Activated CD4-positive, alpha-beta T cell treated with anti-CD3 and anti-CD28 coated beads, Interleukin-2, amount 10 ng/mL, durations not matched to agents 24 days and 14 days (primary cell): ENCODE measurements at regions of chr11 and their contacts with region 1.

Region 1: GRCh38 chr11:67583247-67584204 is at the start of gene GSTP1:
- DNase-seq: peak; percentile 94
- H3K4me3 Mint-ChIP-seq: peak within 1 kb of the TSS; percentile 95
- H3K27ac Mint-ChIP-seq: peak within 1 kb of the TSS; percentile 94
- H3K4me1 Mint-ChIP-seq: peaks cover 40% of the 10 kb centered on the region
- H3K27me3 Mint-ChIP-seq: peaks cover 19% of the 10 kb centered on the region
- total RNA-seq, gene GSTP1: 305 and 312 TPM in 2 replicates

Region 2: DNA sequence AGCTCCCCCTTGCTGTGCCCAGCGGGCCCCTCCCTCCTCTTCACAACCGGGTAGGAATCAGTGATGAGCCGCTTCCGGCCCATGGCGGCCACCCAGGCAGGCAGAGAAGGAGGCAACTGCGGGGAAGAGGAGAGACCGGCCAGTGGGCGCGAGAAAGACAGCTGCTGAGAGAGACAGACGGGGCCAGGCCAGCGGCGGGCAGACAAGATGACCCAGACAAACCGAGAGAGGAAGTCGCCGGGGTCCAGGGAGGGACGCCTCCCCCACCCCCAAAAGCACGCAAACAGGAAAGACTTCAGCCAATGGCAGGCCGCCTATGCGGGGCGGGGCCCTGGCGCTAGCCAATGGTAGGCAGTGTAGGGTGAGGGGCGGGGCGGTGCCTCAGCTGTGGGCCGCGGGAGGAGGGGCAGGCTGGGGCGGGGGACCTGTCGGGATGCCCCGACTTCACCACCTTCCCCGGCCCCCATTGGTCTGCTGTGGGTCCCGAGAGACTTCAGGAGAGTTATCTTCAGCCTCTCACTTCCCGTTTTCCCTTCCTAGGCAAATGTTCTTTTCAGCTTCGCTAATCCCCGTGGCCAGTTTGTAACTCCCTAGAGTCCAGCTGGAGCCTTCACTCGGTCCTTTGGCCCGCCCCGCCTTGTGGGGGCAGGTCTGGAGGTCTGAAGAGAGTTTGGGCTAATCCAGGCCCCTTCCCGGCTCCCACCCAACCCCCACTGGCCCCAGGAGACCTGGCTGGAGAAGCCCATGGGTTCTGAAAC is 230.0 kb before region 1 on chr11 and contains the start of gene POLD4:
- intact Hi-C with region 1: loop called (anchors 10 kb)
- DNase-seq: peak; percentile 99
- H3K4me3 Mint-ChIP-seq: peak within 1 kb of the TSS; percentile 97
- H3K27ac Mint-ChIP-seq: peak within 1 kb of the TSS; percentile 98
- H3K4me1 Mint-ChIP-seq: peaks cover 41% of the 10 kb centered on the region
- H3K27me3 Mint-ChIP-seq: peaks cover 5% of the 10 kb centered on the region
- total RNA-seq, gene POLD4: 36.0 and 36.4 TPM in 2 replicates

Region 3: DNA sequence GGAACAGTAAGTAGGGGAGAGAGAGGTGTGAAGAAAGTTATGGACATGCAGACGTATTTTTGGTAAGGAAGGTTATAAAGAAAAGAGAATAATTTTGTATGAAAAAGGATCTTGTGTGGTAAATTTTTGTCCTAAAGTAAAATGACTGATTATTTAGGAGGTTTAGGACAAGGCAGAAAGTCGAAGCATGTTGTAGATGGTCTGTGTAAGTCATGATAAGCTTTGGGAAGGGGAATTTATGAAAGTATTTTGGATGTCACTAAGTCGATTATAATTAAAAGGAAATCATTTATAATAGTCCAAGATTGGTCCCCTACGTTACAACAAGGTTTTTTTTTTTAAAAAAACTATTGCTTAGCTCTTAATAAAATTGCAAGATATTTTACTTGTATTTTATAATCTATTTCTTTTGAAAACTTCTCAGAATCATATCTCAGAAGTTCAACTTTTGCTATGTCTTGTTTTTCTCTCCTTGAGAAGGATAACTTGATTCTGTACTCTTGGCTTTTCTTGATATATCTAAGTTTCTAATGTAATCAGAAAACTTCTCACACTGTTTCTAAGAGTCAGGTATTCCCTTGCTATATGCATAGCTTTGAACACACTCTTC is 49.4 kb before region 1 on chr11:
- intact Hi-C with region 1: no loop called
- DNase-seq: no peak
- H3K4me3 Mint-ChIP-seq: no peak overlapping the region
- H3K27ac Mint-ChIP-seq: no peak overlapping the region
- H3K4me1 Mint-ChIP-seq: no peaks in the 10 kb centered on the region
- H3K27me3 Mint-ChIP-seq: peaks cover 4% of the 10 kb centered on the region

Region 4: GRCh38 chr11:67613960-67614715 is 30.6 kb after region 1 on chr11:
- intact Hi-C with region 1: loop called (anchors 5 kb)
- DNase-seq: peak; percentile 96
- H3K4me3 Mint-ChIP-seq: peak overlapping the region; percentile 84
- H3K27ac Mint-ChIP-seq: peak overlapping the region; percentile 99
- H3K4me1 Mint-ChIP-seq: peaks cover 16% of the 10 kb centered on the region
- H3K27me3 Mint-ChIP-seq: no peaks in the 10 kb centered on the region

Region 5: DNA sequence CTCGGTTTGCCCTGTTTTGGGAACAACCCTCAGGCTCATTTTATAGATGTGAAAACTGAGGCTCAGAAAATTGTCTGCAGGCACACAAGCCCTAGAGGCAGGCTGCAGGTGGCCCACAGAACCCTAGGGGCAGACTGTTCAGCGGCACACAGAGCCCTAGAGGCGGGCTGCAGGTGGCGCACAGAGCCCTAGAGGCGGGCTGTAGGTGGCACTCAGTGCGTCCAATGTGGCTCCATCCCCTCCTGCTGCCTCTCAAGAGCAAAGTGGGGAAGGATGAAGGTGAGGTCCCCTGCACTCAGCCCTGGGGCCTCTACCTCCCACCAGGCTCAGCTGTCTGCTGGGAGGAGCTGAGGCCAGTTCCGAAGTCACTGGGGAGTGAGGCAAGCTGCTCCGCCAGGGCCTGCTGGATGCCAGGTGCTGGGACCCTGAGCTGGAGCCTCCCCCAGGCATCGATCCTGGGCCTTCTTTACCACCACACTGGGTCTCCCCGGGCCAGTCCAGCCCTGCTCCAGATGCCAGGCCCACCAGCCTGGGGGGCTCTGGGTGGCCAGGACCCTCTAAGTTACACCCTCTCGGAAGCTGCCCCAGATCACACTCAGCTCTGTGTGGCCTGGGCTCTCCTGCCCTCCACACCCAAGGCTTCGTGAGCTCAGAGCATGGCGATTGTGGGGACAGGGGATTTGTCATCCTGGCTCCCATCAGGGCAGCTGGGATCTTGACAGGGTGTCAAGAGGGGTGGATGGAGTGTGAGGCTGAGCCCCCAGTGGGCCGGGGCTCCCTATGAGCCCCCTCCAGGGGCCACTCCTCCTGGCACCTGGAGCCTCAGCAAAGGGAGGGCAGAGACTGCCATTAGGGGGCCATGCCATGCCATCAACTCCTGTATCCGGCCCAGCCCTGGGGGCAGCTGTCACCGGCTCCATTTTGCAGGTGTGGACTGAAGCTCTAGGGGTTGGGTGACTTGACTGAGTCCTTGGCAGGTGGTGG is 64.9 kb after region 1 on chr11:
- intact Hi-C with region 1: no loop called
- DNase-seq: peak; percentile 79
- H3K4me3 Mint-ChIP-seq: no peak overlapping the region
- H3K27ac Mint-ChIP-seq: no peak overlapping the region
- H3K4me1 Mint-ChIP-seq: peaks cover 18% of the 10 kb centered on the region
- H3K27me3 Mint-ChIP-seq: no peaks in the 10 kb centered on the region